ENCODE measurements at regions of chr2 and their contacts with region 1.

Region 1: GRCh38 chr2:237674731-237675276 is 47.4 kb downstream of the LRRFIP1 start:
- DNase-seq: peak; percentile 87
- H3K4me3 Mint-ChIP-seq: peak overlapping the region; percentile 81
- H3K27ac Mint-ChIP-seq: peak overlapping the region; percentile 96
- H3K4me1 Mint-ChIP-seq: peaks cover 57% of the 10 kb centered on the region
- H3K27me3 Mint-ChIP-seq: peaks cover 16% of the 10 kb centered on the region

Region 2: DNA sequence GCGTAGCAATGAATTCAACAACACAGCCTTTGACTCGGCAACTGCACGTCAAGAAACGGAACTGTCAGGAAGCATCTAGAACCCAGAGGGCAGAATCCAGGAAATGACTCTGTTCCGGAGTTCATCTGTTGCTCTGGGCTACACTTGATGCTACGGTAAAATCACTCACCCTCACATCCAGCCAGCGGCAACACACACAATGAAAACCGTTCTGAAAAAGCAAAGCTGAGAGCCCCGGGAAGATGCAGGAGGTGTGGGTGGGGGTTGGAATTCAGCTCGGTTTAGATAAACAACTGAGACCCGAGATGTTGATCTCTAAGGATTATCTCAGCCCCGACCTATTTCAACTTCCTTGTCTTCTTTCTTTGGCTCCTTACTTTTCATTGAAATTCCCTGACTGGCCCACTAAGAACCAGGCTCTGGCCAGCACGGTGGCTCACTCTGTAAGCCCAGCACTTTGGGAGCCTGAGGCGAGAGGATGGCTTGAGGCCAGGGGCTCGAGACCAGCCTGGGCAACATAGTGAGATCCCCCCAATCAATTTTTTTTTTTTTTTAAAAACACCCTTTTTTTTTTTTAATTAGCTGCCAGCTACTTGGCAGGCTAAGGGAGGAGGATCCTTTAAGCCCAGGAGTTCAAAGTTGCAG is 71.0 kb before region 1 on chr2:
- CTCF ChIA-PET with region 1: interaction called, 11 read pairs
- POLR2A ChIA-PET with region 1: interaction called, 3 read pairs
- DNase-seq: peak; percentile 65
- H3K4me3 Mint-ChIP-seq: peak overlapping the region; percentile 29
- H3K27ac Mint-ChIP-seq: peak overlapping the region; percentile 72
- H3K4me1 Mint-ChIP-seq: peaks cover 23% of the 10 kb centered on the region
- H3K27me3 Mint-ChIP-seq: peaks cover 11% of the 10 kb centered on the region

Region 3: DNA sequence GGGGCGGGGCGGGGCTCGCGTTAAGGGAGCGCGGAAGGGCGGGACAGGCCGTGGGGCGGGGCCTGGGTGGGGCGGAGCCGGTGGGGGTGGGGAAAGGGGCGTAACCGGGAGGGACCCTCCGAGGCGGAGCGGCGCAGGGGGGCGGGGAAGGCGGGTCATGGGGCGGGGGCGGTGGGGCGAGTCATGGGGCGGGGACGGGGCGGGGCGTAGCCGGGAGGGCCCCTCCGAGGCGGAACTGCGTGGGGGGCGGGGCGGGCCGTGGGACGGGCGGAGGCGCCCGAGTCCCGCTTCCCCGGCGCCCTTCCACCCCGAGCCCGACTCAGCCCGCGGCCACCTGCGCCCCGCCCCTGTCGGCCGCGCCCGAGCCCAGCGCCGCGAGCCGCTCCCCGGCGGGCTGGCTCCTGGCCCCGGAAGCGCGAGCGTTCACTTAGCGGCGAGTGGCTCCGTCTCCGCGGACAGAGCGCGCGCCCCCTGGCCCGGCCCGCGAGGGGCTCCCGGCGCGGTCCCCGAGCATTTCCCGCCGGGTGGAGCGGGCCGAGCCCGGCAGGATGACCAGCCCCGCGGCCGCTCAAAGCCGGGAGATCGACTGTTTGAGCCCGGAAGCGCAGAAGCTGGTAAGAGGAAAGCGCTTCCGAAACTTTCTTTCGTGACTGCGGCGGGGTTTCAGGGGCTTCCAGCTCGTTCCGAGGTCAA is 17.2 kb after region 1 on chr2:
- CTCF ChIA-PET with region 1: interaction called, 240 read pairs
- POLR2A ChIA-PET with region 1: interaction called, 385 read pairs
- DNase-seq: peak; percentile 97
- H3K4me3 Mint-ChIP-seq: peak overlapping the region; percentile 93
- H3K27ac Mint-ChIP-seq: peak overlapping the region; percentile 95
- H3K4me1 Mint-ChIP-seq: peaks cover 60% of the 10 kb centered on the region
- H3K27me3 Mint-ChIP-seq: no peaks in the 10 kb centered on the region

Region 4: GRCh38 chr2:237708065-237708398 is 33.2 kb after region 1 on chr2:
- CTCF ChIA-PET with region 1: interaction called, 42 read pairs
- POLR2A ChIA-PET with region 1: interaction called, 72 read pairs
- DNase-seq: no peak
- H3K4me3 Mint-ChIP-seq: no peak overlapping the region
- H3K27ac Mint-ChIP-seq: no peak overlapping the region
- H3K4me1 Mint-ChIP-seq: peaks cover 62% of the 10 kb centered on the region
- H3K27me3 Mint-ChIP-seq: no peaks in the 10 kb centered on the region

Region 5: DNA sequence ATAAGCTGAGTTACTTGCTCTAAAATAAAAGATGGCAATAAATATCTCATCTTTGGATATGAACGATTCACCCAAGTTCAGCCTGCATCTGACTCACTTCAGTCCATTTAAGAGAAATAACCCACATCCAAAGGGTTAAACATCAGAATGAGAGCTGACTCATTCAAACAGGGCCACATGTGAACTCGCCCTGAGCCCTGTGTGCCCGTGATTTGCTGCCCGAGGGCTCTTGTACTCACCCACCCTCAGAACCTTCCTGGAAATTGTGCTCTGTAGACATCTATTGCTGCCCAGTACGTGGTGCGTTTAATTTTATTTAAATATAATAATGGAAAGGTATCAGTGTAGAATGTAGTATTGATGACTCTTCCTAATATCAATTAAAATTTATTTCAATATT is 56.9 kb after region 1 on chr2:
- CTCF ChIA-PET with region 1: interaction called, 10 read pairs
- POLR2A ChIA-PET with region 1: interaction called, 15 read pairs
- DNase-seq: peak; percentile 44
- H3K4me3 Mint-ChIP-seq: no peak overlapping the region
- H3K27ac Mint-ChIP-seq: peak overlapping the region; percentile 75
- H3K4me1 Mint-ChIP-seq: peaks cover 59% of the 10 kb centered on the region
- H3K27me3 Mint-ChIP-seq: no peaks in the 10 kb centered on the region

Region 6: DNA sequence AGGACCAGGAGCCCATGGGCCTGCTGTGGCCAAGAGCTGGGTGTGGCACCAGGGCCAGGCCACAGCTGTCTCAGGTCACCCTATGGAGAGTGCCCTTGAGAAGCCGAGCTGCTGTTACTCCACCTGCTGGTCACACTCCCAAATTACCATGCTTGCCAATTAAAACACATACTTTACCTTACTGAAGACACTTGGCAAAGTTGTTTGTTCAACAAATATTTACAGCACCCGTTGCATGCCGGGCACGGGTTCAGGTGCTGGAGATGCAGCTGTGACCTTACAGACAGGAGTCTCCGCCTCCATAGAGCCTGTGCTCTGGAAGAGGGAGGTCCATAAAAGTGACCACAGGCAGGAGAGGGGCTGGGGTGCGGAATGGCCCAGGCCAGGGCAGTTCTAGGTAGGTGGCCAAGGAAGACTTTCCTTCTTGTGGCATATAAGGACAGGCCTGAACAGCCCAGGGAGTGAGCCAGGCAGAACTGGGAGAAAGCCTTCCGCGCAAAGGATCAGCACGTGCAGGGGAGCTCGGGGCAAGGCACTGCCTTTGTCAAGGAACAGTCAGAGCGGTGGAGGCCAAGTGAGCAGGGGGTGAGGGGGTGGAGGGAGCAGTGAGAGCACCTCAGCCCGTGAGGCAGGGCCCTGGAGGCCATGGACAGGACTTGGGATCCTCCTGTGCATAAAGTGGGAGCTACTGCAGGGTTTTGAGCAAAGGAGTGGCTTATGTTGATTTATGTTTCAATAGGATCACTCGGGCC is 100.2 kb after region 1 on chr2:
- CTCF ChIA-PET with region 1: interaction called, 13 read pairs
- POLR2A ChIA-PET with region 1: interaction called, 6 read pairs
- DNase-seq: peak; percentile 51
- H3K4me3 Mint-ChIP-seq: no peak overlapping the region
- H3K27ac Mint-ChIP-seq: peak overlapping the region; percentile 45
- H3K4me1 Mint-ChIP-seq: peaks cover 2% of the 10 kb centered on the region
- H3K27me3 Mint-ChIP-seq: no peaks in the 10 kb centered on the region